ENCODE measurements at regions of chr3 and their contacts with region 1.

Region 1: GRCh38 chr3:50542177-50543034 is 25.1 kb downstream of the C3orf18 start:
- DNase-seq: peak; percentile 71
- ATAC-seq: peak; percentile 73
- H3K4me3 Mint-ChIP-seq: no peak overlapping the region
- H3K27ac Mint-ChIP-seq: no peak overlapping the region
- H3K4me1 Mint-ChIP-seq: no peaks in the 10 kb centered on the region
- H3K27me3 Mint-ChIP-seq: peaks cover 30% of the 10 kb centered on the region

Region 2: DNA sequence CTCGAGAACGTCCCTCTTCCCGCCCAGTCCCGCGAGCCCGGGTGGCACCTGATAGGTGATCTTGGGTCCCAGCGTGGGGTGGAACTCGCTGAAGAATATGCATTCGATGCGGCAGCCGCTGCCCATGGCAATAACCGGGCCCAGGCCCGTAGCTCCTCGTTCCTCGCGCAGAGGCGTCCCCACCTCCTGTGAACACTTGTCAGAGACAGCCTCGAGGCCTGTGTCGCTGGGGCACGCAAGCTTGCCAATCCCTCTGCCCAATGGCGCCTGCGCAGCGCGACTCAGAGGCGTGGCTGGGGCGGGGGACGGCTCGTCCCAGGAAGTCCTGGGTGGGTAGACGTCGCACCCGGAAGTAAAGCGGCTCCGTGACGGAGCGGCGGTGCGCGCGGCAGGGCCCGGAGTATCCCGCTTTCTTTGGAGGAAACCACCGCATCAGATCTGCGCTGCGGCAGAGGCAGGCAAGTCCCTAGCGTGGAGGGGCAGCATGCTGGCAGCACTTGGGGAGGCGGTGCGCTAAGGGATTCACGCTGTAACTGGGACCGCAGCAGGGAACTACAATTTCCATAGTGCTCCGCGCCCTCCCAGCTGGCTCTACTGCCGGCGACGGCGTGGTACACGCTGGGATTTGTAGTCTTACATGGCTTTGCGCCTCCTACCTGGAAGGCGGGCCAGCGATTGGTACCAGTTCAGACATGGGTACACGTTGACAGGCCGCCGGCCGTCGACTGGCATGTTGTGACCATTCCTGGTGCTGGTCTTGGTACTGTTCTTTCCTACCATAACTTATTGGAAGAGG is 191.7 kb before region 1 on chr3 and contains the starts of genes CYB561D2 and NPRL2:
- CTCF ChIA-PET with region 1: interaction called, 26 read pairs
- POLR2A ChIA-PET with region 1: interaction called, 3 read pairs
- DNase-seq: peak; percentile 99
- ATAC-seq: peak; percentile 92
- H3K4me3 Mint-ChIP-seq: peak within 1 kb of the TSS; percentile 96
- H3K27ac Mint-ChIP-seq: peak within 1 kb of the TSS; percentile 99
- H3K4me1 Mint-ChIP-seq: peaks cover 68% of the 10 kb centered on the region
- H3K27me3 Mint-ChIP-seq: no peaks in the 10 kb centered on the region
- total RNA-seq, gene CYB561D2: 42.5 to 43.6 TPM
- total RNA-seq, gene NPRL2: 59.8 to 60.3 TPM

Region 3: DNA sequence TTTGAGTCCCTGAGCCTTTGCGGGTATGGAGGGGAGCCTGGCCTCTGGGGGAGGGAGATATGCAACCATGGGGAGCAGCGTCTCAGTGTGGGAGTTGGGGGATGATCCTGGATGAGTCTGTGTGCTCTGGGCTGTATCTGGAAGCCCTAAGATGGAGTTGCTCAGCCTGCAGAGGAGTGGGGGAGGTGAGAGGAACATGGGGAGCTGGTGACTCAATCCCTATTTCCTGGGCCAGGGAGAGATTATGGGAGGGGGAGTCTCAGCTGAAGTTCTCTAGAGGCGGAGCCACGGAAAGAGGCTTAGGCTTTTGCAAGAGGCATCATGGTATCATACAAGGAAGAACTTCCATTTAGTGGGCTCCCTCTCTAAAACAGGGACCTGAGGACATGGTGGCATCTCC is 123.6 kb before region 1 on chr3:
- CTCF ChIA-PET with region 1: no interaction called
- POLR2A ChIA-PET with region 1: no interaction called
- DNase-seq: no peak
- ATAC-seq: no peak
- H3K4me3 Mint-ChIP-seq: no peak overlapping the region
- H3K27ac Mint-ChIP-seq: no peak overlapping the region
- H3K4me1 Mint-ChIP-seq: peaks cover 2% of the 10 kb centered on the region
- H3K27me3 Mint-ChIP-seq: no peaks in the 10 kb centered on the region

Region 4: GRCh38 chr3:50436114-50436674 is 106.2 kb before region 1 on chr3:
- CTCF ChIA-PET with region 1: interaction called, 48 read pairs
- POLR2A ChIA-PET with region 1: no interaction called
- DNase-seq: peak; percentile 87
- ATAC-seq: peak; percentile 96
- H3K4me3 Mint-ChIP-seq: no peak overlapping the region
- H3K27ac Mint-ChIP-seq: peak overlapping the region; percentile 2
- H3K4me1 Mint-ChIP-seq: peaks cover 4% of the 10 kb centered on the region
- H3K27me3 Mint-ChIP-seq: no peaks in the 10 kb centered on the region

Region 5: GRCh38 chr3:50525987-50526386 is 16.4 kb before region 1 on chr3:
- CTCF ChIA-PET with region 1: interaction called, 12 read pairs
- POLR2A ChIA-PET with region 1: no interaction called
- DNase-seq: peak; percentile 84
- ATAC-seq: peak; percentile 91
- H3K4me3 Mint-ChIP-seq: no peak overlapping the region
- H3K27ac Mint-ChIP-seq: no peak overlapping the region
- H3K4me1 Mint-ChIP-seq: peaks cover 7% of the 10 kb centered on the region
- H3K27me3 Mint-ChIP-seq: peaks cover 18% of the 10 kb centered on the region

Region 6: GRCh38 chr3:50600841-50601591 is 58.6 kb after region 1 on chr3:
- CTCF ChIA-PET with region 1: no interaction called
- POLR2A ChIA-PET with region 1: no interaction called
- DNase-seq: peak; percentile 91
- ATAC-seq: peak; percentile 61
- H3K4me3 Mint-ChIP-seq: peak overlapping the region; percentile 94
- H3K27ac Mint-ChIP-seq: peak overlapping the region; percentile 97
- H3K4me1 Mint-ChIP-seq: peaks cover 89% of the 10 kb centered on the region
- H3K27me3 Mint-ChIP-seq: no peaks in the 10 kb centered on the region

Region 7: DNA sequence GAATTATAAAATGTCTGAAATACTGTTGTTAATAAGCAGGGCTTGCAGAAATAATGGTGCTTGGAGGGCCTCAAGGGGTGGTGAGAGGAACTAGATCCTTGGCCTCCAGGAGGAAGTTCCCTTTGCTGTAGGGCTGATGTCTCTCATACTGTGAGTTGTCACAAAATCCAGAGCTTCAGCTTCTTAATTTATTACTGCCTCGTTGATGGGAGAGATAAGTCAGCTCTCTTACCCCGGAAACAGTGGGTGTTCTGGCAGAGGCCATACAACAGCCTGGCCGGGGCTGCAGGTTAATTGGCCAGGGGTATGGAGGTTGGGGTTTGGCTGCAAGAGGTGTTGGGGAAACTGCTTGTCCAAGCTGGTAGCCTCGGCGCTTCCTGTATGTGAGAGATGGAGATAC is 90.0 kb after region 1 on chr3:
- CTCF ChIA-PET with region 1: no interaction called
- POLR2A ChIA-PET with region 1: no interaction called
- DNase-seq: no peak
- ATAC-seq: peak; percentile 34
- H3K4me3 Mint-ChIP-seq: peak overlapping the region; percentile 3
- H3K27ac Mint-ChIP-seq: peak overlapping the region; percentile 87
- H3K4me1 Mint-ChIP-seq: peaks cover 92% of the 10 kb centered on the region
- H3K27me3 Mint-ChIP-seq: no peaks in the 10 kb centered on the region

Measured in activated CD8-positive, alpha-beta T cell treated with anti-CD3 and anti-CD28 coated beads, Interleukin-2, amount 10 ng/mL, durations not matched to agents 7 days and 5 days (primary cell).